H1 (cell line): ENCODE measurements at regions of chr6 and their contacts with region 1.

Region 1: DNA sequence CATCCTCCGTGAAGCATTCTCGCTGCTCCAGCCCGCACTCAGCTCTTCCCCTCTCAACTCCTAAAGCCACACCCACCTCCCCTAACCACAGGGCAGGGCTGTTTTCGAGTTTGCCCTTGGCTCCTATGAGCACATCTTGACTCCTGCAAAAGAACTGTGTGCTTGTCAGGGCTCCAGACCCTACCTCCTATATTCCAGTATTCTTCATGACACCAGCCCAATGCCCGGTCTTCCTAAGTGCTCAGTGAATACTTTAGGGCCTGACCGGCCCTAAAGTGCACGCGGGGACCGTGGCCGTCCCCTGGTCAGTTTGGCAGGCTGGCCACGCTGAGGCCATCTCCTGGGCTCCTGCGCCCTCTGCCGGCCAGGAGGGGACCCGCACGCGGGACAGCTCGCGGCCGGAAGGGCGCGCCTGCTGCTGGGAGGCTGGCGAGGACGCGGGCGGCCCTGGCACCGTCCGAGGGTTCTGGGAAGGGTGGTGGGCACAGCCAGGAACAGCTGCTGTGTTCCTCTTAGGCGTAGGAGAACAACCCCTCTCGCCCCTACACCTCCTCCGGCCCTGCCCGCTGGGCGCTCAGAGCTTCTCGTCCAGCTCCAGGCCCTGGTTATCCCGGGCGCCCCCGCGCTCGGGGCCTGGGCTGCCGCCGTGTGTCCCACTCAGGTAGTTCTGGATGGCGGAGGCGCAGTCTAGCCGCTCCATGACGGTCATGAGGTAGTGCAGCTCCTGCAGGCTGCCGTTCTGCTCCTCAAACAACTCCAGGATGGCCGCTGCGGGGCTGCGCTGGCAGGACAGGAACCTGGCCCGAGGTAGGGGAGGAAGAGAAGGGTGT is 11.0 kb downstream of the UNC5CL start:
- DNase-seq: peak; percentile 60 to 97
- H3K4me3 ChIP-seq: peak overlapping the region; percentile 30 to 68 (median 57)
- H3K27ac ChIP-seq: no peak overlapping the region; the same call in 1 of the 2 replicates
- H3K4me1 ChIP-seq: peaks cover 0 to 11% (median 3%) of the 10 kb centered on the region in 4 experiments; a peak in 5 of 7 replicates
- H3K27me3 ChIP-seq: no peaks in the 10 kb centered on the region; a peak in 1 of 7 replicates
- CTCF ChIP-seq: peak; percentile 89 to 99 (median 92)
- EP300 ChIP-seq: no peak
- POLR2A ChIP-seq: peak in 1 of 2 experiments; percentile 36; a peak in 2 of 3 replicates
- RAD21 ChIP-seq: peak; percentile 92 to 96

Region 2: DNA sequence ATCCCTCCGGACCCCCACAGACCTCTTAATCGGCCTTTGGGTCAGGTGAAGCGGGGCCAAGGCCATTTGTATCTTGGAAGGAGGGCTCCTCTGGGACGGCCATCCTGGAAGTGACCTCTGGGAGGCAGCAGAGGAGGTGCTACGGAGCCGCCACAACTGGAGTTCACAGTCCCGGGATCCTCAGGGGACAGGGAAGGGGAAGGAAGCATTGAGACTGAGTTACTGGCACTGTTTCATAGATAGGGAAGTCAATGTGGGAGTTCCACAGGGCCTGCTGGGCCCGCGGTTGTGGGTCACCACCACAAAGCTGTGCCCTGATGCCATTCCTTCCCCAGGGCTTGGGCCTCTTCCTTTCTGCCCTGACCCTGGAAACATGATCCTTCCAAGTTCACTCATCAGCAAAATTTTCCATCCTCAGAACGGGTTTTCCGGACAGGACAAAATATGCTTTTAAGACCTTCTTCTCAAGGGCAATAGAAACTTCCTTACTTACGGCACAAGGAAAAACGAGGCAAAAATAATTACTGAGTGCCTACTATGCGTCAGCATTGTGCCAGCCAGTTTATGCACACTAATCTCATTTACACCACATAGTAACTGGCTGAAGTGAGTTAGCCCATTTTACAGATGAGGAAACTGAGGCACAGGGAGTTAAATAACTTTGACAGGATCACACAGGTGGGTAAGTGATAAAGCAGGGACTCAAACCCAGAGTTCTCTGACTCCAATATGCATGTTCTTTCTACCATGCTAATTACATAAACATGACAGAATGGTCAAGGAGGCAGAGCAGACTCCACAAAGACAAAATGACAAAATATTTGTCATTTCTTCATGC is 132.8 kb before region 1 on chr6:
- CTCF ChIA-PET with region 1: interaction called, 199 read pairs
- POLR2A ChIA-PET with region 1: interaction called, 5 read pairs
- DNase-seq: peak; percentile 46 to 85
- H3K4me3 ChIP-seq: no peak overlapping the region
- H3K27ac ChIP-seq: no peak overlapping the region
- H3K4me1 ChIP-seq: no peaks in the 10 kb centered on the region
- H3K27me3 ChIP-seq: no peaks in the 10 kb centered on the region; a peak in 2 of 7 replicates
- CTCF ChIP-seq: peak; percentile 81 to 91 (median 83)
- EP300 ChIP-seq: no peak
- POLR2A ChIP-seq: no peak
- RAD21 ChIP-seq: peak; percentile 94 to 95

Region 3: GRCh38 chr6:40922281-40922680 is 105.7 kb before region 1 on chr6:
- CTCF ChIA-PET with region 1: interaction called, 33 read pairs
- POLR2A ChIA-PET with region 1: interaction called, 4 read pairs
- DNase-seq: no peak
- H3K4me3 ChIP-seq: no peak overlapping the region
- H3K27ac ChIP-seq: no peak overlapping the region
- H3K4me1 ChIP-seq: peaks cover 0 to 13% (median 3%) of the 10 kb centered on the region in 4 experiments; a peak in 5 of 7 replicates
- H3K27me3 ChIP-seq: peaks cover 0 to 5% (median 0%) of the 10 kb centered on the region in 4 experiments; a peak in 1 of 7 replicates
- CTCF ChIP-seq: no peak
- EP300 ChIP-seq: no peak
- POLR2A ChIP-seq: no peak
- RAD21 ChIP-seq: no peak

Region 4: GRCh38 chr6:40999569-40999968 is 28.4 kb before region 1 on chr6:
- CTCF ChIA-PET with region 1: interaction called, 37 read pairs
- POLR2A ChIA-PET with region 1: interaction called, 5 read pairs
- DNase-seq: peak; percentile 53 to 59
- H3K4me3 ChIP-seq: no peak overlapping the region
- H3K27ac ChIP-seq: no peak overlapping the region
- H3K4me1 ChIP-seq: peaks cover 12 to 32% (median 23%) of the 10 kb centered on the region in 4 experiments
- H3K27me3 ChIP-seq: no peaks in the 10 kb centered on the region; a peak in 2 of 7 replicates
- CTCF ChIP-seq: peak; percentile 58 to 83 (median 75)
- EP300 ChIP-seq: no peak
- POLR2A ChIP-seq: no peak
- RAD21 ChIP-seq: peak; percentile 15 to 62; a peak in 3 of 4 replicates

Region 5: GRCh38 chr6:41013466-41014153 is 14.4 kb before region 1 on chr6:
- CTCF ChIA-PET with region 1: interaction called, 37 read pairs
- POLR2A ChIA-PET with region 1: interaction called, 7 read pairs
- DNase-seq: no peak
- H3K4me3 ChIP-seq: no peak overlapping the region
- H3K27ac ChIP-seq: no peak overlapping the region
- H3K4me1 ChIP-seq: no peaks in the 10 kb centered on the region
- H3K27me3 ChIP-seq: no peaks in the 10 kb centered on the region
- CTCF ChIP-seq: no peak
- EP300 ChIP-seq: no peak
- POLR2A ChIP-seq: no peak
- RAD21 ChIP-seq: no peak

Region 6: GRCh38 chr6:41045664-41046063 is 17.6 kb after region 1 on chr6:
- CTCF ChIA-PET with region 1: interaction called, 80 read pairs
- POLR2A ChIA-PET with region 1: interaction called, 3 read pairs
- DNase-seq: no peak
- H3K4me3 ChIP-seq: no peak overlapping the region
- H3K27ac ChIP-seq: no peak overlapping the region
- H3K4me1 ChIP-seq: no peaks in the 10 kb centered on the region
- H3K27me3 ChIP-seq: no peaks in the 10 kb centered on the region
- CTCF ChIP-seq: no peak
- EP300 ChIP-seq: no peak
- POLR2A ChIP-seq: no peak
- RAD21 ChIP-seq: no peak